Heart right ventricle (tissue), 16 donors: ENCODE measurements at regions of chr13 and their contacts with region 1.

Region 1: DNA sequence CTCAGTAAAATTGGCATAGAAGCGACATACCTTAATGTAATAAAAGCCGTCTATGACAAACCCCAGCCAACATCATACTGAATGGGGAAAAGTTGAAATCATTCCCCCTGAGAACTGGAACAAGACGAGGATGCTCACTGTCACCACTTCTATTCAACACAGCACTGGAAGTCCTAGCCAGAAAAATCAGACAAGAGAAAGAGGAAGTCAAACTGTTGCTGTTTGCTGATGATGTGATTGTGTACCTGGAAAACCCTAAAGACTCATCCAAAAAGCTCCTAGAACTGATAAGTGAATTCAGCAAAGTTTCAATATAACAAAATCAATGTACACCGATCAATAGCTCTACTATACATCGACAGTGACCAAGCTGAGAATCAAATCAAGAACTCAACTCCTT is 63.3 kb downstream of the TNFSF13B start:
- DNase-seq: no peak
- ATAC-seq: no peak
- H3K4me3 ChIP-seq: no peak overlapping the region
- H3K27ac ChIP-seq: no peak overlapping the region
- H3K4me1 ChIP-seq: no peaks in the 10 kb centered on the region
- H3K27me3 ChIP-seq: peaks cover 0 to 31% (median 3%) of the 10 kb centered on the region in 7 donors
- CTCF ChIP-seq: no peak

Region 2: DNA sequence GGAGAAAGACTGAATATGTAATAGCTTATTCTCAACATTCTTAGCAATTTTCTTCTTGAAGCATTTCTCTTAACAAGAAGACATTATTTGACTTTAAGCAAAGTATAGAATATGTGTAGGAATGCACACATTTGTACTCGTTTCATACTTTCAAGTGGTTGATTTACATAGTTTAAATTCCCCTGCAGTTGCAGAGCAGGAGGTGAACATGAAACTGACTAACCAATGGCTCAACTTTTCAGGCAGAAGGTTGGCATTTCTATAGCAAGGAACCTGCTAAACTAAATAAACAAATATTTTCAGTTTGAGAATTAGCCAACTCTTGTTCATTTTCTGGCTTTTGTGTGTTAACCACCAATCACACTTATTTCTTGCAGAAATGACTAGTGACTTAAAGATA is 151.2 kb after region 1 on chr13:
- intact Hi-C with region 1: loop called in 1 of 10 experiments (anchors 10 kb)
- DNase-seq: no peak
- ATAC-seq: no peak
- H3K4me3 ChIP-seq: no peak overlapping the region
- H3K27ac ChIP-seq: no peak overlapping the region
- H3K4me1 ChIP-seq: no peaks in the 10 kb centered on the region
- H3K27me3 ChIP-seq: peaks cover 0 to 10% (median 0%) of the 10 kb centered on the region in 7 donors
- CTCF ChIP-seq: no peak

Region 3: GRCh38 chr13:108508263-108508662 is 175.5 kb after region 1 on chr13:
- intact Hi-C with region 1: loop called in 3 of 10 experiments (anchors 10 kb)
- DNase-seq: no peak
- ATAC-seq: no peak
- H3K4me3 ChIP-seq: no peak overlapping the region
- H3K27ac ChIP-seq: no peak overlapping the region
- H3K4me1 ChIP-seq: no peaks in the 10 kb centered on the region
- H3K27me3 ChIP-seq: no peaks in the 10 kb centered on the region
- CTCF ChIP-seq: peak in 8 of 9 donors; percentile 6 to 54 (median 38)

Region 4: DNA sequence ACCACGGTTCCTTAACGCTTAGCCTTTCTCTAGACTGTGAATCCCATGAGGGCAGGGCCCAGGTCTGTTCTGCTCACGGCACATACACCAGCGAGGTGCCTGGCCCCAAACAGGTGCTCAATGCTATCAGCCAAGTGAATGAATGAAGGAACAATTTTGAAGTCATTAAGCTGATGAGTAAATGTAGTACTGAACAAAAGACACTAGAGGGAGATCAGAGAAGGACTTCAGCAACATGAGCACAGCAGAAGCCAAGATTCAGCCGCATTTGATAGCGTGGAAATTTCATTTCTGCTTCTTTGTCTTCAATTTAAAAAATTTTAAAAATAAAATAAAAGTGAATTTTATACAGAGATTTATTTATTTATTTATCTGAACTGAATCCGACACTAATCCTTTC is 276.6 kb after region 1 on chr13:
- intact Hi-C with region 1: loop called in 2 of 10 experiments (anchors 10 kb)
- DNase-seq: no peak
- ATAC-seq: peak in 2 of 8 donors; percentile 64 to 69
- H3K4me3 ChIP-seq: no peak overlapping the region
- H3K27ac ChIP-seq: no peak overlapping the region
- H3K4me1 ChIP-seq: peaks cover 0 to 7% (median 0%) of the 10 kb centered on the region in 9 donors
- H3K27me3 ChIP-seq: no peaks in the 10 kb centered on the region
- CTCF ChIP-seq: peak; percentile 19 to 63 (median 56)